Activated CD8-positive, alpha-beta T cell treated with anti-CD3 and anti-CD28 coated beads, Interleukin-2, amount 10 ng/mL, durations not matched to agents 7 days and 5 days (primary cell): ENCODE measurements at regions of chr1 and their contacts with region 1.

Region 1: DNA sequence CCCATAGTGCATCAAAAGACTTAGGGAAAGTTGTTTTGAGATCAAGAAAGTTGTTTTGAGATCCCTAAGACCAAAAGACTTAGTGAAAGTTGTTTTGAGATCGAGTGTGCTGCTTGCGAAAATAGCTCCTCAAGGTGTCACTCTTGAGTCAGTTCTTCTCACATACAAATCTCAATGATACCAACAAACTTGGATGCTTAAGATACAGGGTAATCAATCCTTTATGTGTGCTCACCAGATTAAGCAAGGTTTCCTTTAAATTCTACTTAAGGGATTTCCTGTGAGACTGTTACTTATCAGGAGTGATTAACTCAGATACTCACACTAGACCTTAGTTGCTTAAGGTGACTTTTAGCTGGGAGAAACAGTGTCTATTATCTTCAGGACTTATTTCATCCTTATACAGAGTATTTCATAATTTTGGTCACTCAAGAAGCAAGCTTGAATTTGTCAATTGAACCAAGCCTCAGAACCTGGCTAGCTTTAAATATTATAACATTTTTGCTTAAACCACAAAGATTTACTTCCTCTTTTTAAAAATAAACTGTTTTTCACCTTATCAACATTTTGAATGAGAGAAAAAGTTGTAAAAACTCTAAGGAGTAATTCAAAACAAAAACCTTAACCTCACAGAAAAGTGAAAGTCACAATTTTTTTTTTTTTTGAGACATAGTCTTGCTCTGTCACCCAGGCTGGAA is 8.0 kb upstream of the RLF start:
- DNase-seq: peak; percentile 63
- ATAC-seq: peak; percentile 72
- H3K4me3 Mint-ChIP-seq: no peak overlapping the region
- H3K27ac Mint-ChIP-seq: no peak overlapping the region
- H3K4me1 Mint-ChIP-seq: peaks cover 9% of the 10 kb centered on the region
- H3K27me3 Mint-ChIP-seq: peaks cover 11% of the 10 kb centered on the region

Region 2: GRCh38 chr1:40197656-40198055 is 44.4 kb after region 1 on chr1:
- CTCF ChIA-PET with region 1: interaction called, 11 read pairs
- POLR2A ChIA-PET with region 1: no interaction called
- DNase-seq: no peak
- ATAC-seq: no peak
- H3K4me3 Mint-ChIP-seq: no peak overlapping the region
- H3K27ac Mint-ChIP-seq: no peak overlapping the region
- H3K4me1 Mint-ChIP-seq: no peaks in the 10 kb centered on the region
- H3K27me3 Mint-ChIP-seq: no peaks in the 10 kb centered on the region

Region 3: DNA sequence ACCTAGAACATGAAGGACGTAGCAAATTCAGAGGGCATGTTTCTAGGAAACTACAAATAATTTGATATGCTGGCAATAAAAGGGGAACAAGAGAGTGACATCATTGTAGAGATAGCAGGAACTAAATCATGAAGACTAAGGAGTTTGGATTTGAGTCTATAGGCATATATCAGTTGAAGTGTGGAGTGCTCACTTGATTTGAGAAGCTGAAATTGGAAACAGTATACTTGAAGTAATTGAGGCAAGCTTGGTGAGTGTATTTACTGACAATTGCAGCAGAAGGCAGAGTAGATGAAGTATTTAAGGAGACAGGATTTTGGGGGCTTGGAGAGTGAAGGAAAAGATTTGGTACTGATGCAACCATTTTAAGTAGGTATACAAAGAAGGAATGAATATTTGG is 88.1 kb after region 1 on chr1:
- CTCF ChIA-PET with region 1: interaction called, 18 read pairs
- POLR2A ChIA-PET with region 1: interaction called, 3 read pairs
- DNase-seq: no peak
- ATAC-seq: no peak
- H3K4me3 Mint-ChIP-seq: no peak overlapping the region
- H3K27ac Mint-ChIP-seq: peak overlapping the region; percentile 76
- H3K4me1 Mint-ChIP-seq: peaks cover 36% of the 10 kb centered on the region
- H3K27me3 Mint-ChIP-seq: no peaks in the 10 kb centered on the region

Region 4: DNA sequence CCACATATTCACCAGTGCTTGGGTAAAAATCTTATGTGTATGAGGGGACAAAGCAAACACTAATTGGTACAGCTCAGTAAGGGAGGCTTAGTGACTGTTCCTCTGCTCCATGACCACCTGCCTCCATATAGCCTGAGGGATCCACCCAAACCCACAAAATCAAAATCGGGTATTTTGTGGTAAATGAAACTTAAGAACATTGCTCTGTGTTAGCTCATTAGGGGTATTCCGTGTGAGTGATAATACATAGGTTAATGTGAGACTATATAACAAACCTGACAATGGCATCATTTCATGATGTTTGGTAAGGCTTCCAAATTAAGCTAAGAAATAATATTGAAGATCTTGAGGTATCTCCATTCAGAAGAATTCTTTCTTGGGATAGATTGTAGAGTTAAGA is 138.1 kb after region 1 on chr1:
- CTCF ChIA-PET with region 1: interaction called, 29 read pairs
- POLR2A ChIA-PET with region 1: no interaction called
- DNase-seq: no peak
- ATAC-seq: no peak
- H3K4me3 Mint-ChIP-seq: no peak overlapping the region
- H3K27ac Mint-ChIP-seq: no peak overlapping the region
- H3K4me1 Mint-ChIP-seq: peaks cover 6% of the 10 kb centered on the region
- H3K27me3 Mint-ChIP-seq: no peaks in the 10 kb centered on the region

Region 5: GRCh38 chr1:40385437-40386358 is 232.5 kb after region 1 on chr1:
- CTCF ChIA-PET with region 1: interaction called, 14 read pairs
- POLR2A ChIA-PET with region 1: no interaction called
- DNase-seq: peak; percentile 84
- ATAC-seq: peak; percentile 68
- H3K4me3 Mint-ChIP-seq: peak overlapping the region; percentile 79
- H3K27ac Mint-ChIP-seq: peak overlapping the region; percentile 99
- H3K4me1 Mint-ChIP-seq: peaks cover 94% of the 10 kb centered on the region
- H3K27me3 Mint-ChIP-seq: no peaks in the 10 kb centered on the region